GM10248 (cell line): ENCODE measurements at regions of chr20 and their contacts with region 1.

Region 1: GRCh38 chr20:58650776-58651558 is at the start of gene STX16:
- DNase-seq: peak; percentile 94
- CTCF ChIP-seq: peak; percentile 27

Region 2: DNA sequence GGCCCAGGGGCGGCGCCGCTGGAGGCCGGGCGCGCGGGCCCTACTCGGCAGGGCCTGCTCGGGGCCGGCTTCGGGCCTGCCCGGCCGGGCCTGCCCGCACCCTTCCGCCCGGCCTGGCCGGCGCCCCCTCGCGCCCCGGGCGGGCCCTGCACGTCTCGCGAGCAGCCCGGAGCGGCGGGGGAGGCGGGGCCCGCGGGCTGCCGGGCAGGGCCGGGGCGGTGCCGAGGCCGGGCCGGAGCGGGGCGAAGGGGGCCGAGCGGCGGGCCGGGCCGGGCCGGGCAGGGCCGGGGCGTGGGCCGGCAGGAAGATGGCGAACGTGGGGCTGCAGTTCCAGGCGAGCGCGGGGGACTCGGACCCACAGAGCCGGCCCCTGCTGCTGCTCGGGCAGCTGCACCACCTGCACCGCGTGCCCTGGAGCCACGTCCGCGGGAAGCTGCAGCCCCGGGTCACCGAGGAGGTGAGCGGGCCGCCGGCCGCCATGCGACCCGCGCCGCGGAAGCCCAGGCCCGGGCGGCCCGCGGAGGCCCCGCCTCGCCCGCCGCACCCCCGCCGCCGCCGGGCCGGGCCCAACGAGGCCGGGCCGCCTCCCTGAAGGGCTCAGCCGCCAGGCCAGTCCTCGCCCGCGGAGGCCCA is 41.7 kb after region 1 on chr20 and contains the start of gene NPEPL1:
- CTCF ChIA-PET with region 1: interaction called, 10 read pairs
- POLR2A ChIA-PET with region 1: interaction called, 3 read pairs
- DNase-seq: peak; percentile 95
- CTCF ChIP-seq: peak; percentile 63

Region 3: DNA sequence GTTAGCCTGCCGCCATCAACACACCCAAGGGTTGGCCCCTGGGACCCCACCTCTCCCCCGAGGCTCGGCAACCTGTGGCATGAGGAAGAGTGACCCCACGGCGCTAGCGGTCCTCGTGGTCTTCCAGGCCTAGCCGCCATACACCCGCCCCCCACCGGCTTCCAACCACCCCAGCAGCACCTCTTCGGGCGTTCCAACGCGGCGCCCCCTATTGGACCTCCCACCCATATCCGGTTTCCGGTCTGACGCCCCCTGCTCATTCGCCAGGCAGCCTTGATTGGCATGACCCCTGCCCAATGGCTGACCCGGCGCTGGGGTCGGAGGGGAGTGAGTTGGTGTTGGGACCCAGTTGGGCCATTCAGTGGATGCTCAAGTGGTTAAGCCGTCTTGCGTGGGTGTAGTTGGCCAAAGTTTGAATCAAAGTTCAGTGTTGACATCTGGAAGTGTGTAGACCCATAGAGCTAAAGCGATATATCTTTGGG is 199.8 kb after region 1 on chr20 and contains the start of gene GNAS-AS1:
- CTCF ChIA-PET with region 1: interaction called, 11 read pairs
- POLR2A ChIA-PET with region 1: no interaction called
- DNase-seq: peak; percentile 94
- CTCF ChIP-seq: peak; percentile 9